ENCODE measurements at regions of chr2 and their contacts with region 1.

Region 1: DNA sequence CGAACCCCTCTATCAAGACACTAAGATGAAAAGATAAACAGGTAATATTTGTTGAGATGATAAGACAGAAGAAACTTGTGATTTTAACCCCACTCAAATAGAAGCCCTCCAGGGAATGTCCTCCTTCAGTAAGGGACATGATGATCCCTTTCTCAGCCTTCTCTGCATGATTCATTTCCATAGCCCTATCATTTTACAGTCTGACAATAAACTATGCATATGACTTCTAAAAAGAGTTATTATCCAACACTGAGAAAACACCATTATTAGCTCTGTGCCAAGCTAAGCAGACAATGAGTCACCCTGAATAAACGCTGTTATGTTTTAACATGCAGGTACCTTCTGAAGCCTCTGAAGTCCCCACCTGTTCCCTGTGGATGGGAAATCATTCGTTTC is 54.7 kb downstream of the DTNB start:
- DNase-seq: peak; percentile 93
- H3K4me3 ChIP-seq: peak overlapping the region; percentile 18 to 25 (median 22)
- H3K27ac ChIP-seq: peak overlapping the region; percentile 86
- H3K4me1 ChIP-seq: peaks cover 41% of the 10 kb centered on the region
- H3K27me3 ChIP-seq: no peaks in the 10 kb centered on the region
- CTCF ChIP-seq: no peak

Region 2: GRCh38 chr2:25655316-25655715 is 36.7 kb after region 1 on chr2:
- CTCF ChIA-PET with region 1: no interaction called
- dilution Hi-C with region 1: no loop called
- in situ Hi-C with region 1: loop called in 1 of 2 experiments (anchors 10 kb)
- intact Hi-C with region 1: loop called (anchors 2 kb)
- DNase-seq: peak; percentile 92
- H3K4me3 ChIP-seq: no peak overlapping the region
- H3K27ac ChIP-seq: peak overlapping the region; percentile 50
- H3K4me1 ChIP-seq: peaks cover 60% of the 10 kb centered on the region
- H3K27me3 ChIP-seq: no peaks in the 10 kb centered on the region
- CTCF ChIP-seq: no peak

Region 3: DNA sequence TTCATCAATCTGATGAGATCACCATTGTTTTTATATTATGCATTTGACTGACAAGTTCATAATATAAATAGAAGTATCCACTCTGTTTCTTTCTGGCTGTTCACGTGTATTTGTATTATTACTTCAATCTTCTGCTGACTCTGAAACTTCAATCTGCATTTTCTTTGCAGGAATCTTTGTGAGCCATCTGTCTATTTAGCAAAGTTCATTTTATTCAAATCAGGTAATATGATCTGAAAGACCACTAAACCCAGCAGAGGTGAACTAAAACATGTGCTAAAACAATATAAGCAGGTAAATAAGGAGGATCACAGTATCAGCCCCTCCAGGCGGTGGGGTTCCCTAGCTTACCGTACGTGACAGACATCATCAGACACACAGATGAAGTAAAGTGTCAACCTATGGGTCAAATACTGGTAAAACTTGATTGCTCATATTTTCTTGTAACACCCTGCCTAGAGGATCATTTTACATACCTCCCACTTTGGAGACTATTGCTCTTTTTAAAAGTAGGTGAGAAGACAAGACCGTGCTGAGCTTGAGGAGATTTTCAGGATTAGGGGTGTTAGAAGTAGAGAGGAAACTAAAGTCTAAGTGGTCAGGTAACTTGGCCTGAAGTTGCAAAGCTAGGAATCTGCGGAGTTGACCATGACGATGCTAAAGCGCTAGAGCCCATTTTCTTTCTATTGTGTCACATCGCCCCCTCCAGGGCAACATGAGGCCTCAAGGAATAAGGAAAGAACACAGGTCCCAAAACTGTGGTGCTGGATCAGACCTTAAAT is 45.7 kb after region 1 on chr2:
- CTCF ChIA-PET with region 1: no interaction called
- dilution Hi-C with region 1: no loop called
- in situ Hi-C with region 1: loop called in 1 of 2 experiments (anchors 10 kb)
- intact Hi-C with region 1: no loop called
- DNase-seq: peak; percentile 72
- H3K4me3 ChIP-seq: no peak overlapping the region
- H3K27ac ChIP-seq: peak overlapping the region; percentile 47
- H3K4me1 ChIP-seq: peaks cover 14% of the 10 kb centered on the region
- H3K27me3 ChIP-seq: no peaks in the 10 kb centered on the region
- CTCF ChIP-seq: peak; percentile 63 to 66

Region 4: DNA sequence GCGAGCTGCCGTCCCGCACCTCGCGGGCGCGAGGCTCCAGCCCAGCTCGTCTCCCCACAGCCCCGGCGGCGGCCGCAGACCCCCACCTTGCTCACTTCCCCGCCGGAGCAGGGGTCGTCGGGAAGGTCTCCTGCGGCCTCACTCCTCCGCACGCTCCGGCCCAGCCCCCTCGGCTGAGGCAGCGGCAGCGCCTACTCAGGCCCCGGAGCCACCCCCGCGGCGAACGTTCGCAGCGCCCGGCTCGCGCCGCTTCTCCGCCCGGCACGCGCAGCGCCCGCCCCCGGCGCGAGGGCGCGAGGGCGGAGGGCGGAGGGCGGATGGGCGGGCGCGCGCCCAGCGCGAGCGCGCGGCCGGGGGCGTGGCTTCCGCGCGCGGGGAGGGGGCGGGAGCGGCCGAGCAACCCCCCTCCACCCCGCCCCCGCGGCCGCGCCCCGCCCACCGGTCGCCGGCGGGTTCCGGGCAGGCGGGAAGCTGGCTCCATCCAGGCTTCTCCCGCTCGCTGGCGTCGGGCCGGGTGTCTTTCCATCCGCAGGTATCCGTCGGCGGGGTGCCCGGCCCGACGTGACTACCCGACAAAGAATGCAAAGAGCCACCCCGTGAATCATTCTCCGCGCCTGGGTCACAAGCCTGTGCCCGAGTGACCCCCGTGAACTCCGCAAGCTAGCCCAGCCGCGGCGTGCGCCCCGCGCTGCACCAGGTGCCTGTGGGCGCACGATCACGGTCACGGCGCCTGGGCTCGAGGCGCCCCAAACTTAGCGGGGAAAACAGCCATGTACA is 54.8 kb after region 1 on chr2 and contains the start of gene DTNB:
- CTCF ChIA-PET with region 1: no interaction called
- dilution Hi-C with region 1: no loop called
- in situ Hi-C with region 1: loop called in 1 of 2 experiments (anchors 10 kb)
- intact Hi-C with region 1: loop called (anchors 1 kb)
- DNase-seq: peak; percentile 89
- H3K4me3 ChIP-seq: peak within 1 kb of the TSS; percentile 79 to 93 (median 85)
- H3K27ac ChIP-seq: peak within 1 kb of the TSS; percentile 67
- H3K4me1 ChIP-seq: peaks cover 24% of the 10 kb centered on the region
- H3K27me3 ChIP-seq: no peaks in the 10 kb centered on the region
- CTCF ChIP-seq: no peak
- total RNA-seq, gene DTNB: 38.8 to 42.9 TPM

Measured in mammary epithelial cell (primary cell).